Caco-2 (cell line): ENCODE measurements at regions of chr19 and their contacts with region 1.

Region 1: DNA sequence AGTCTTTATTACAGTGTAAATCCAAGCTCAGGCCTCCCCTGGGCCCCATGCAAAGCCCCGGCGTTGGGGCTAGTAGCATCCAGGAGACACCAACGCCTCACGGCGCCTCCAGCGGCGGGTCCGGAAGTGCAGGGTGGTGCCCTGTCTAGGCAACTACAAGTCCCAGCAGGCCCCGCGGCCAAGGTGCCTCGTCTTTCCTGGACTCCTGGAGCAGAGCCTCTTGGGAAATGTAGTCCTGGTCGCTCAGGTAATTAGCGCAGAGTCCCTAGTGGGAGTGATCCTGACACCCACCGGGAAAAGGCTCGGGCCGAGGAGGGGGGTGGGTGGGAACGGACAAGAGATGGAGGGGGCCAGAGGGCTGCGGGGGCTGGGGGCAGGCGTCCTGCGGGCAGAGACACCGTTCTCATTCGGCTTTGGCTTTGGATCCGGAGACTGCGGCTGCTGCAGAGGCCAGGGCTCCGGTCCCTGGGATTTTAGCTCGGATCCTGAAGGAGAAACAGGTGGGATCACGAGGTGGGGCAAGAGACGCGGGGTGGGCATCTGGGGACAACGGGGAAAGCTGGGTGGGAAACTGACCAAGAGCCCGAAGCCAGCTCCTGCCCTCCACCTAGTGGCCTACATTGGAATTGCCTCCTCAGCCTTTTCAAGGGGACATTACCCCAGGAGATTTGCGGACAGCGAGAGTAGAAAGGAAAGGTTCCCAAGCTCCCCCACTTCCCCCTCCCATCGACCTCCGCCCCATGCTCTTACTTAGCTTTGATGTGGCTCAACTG is 11.4 kb downstream of the RTN2 start:
- DNase-seq: peak; percentile 98
- H3K4me3 ChIP-seq: peak overlapping the region; percentile 66
- H3K4me3 Mint-ChIP-seq: peak overlapping the region; percentile 88
- H3K27ac Mint-ChIP-seq: peak overlapping the region; percentile 74
- H3K4me1 ChIP-seq: no peaks in the 10 kb centered on the region
- H3K4me1 Mint-ChIP-seq: peaks cover 6% of the 10 kb centered on the region
- H3K27me3 ChIP-seq: no peaks in the 10 kb centered on the region
- H3K27me3 Mint-ChIP-seq: no peaks in the 10 kb centered on the region
- CTCF ChIP-seq: peak; percentile 91 to 92

Region 2: GRCh38 chr19:45264781-45265317 is 220.6 kb before region 1 on chr19:
- CTCF ChIA-PET with region 1: no interaction called
- POLR2A ChIA-PET with region 1: no interaction called
- intact Hi-C with region 1: no loop called
- DNase-seq: no peak
- H3K4me3 ChIP-seq: no peak overlapping the region
- H3K4me3 Mint-ChIP-seq: no peak overlapping the region
- H3K27ac Mint-ChIP-seq: no peak overlapping the region
- H3K4me1 ChIP-seq: no peaks in the 10 kb centered on the region
- H3K4me1 Mint-ChIP-seq: no peaks in the 10 kb centered on the region
- H3K27me3 ChIP-seq: no peaks in the 10 kb centered on the region
- H3K27me3 Mint-ChIP-seq: no peaks in the 10 kb centered on the region
- CTCF ChIP-seq: no peak

Region 3: GRCh38 chr19:45496349-45496953 is 11.0 kb after region 1 on chr19:
- CTCF ChIA-PET with region 1: interaction called, 24 read pairs
- POLR2A ChIA-PET with region 1: no interaction called
- intact Hi-C with region 1: loop called (anchors 1 kb)
- DNase-seq: peak in 1 of 2 experiments; percentile 76
- H3K4me3 ChIP-seq: peak overlapping the region; percentile 80
- H3K4me3 Mint-ChIP-seq: peak overlapping the region; percentile 98
- H3K27ac Mint-ChIP-seq: peak overlapping the region; percentile 85
- H3K4me1 ChIP-seq: peaks cover 22% of the 10 kb centered on the region
- H3K4me1 Mint-ChIP-seq: peaks cover 23% of the 10 kb centered on the region
- H3K27me3 ChIP-seq: no peaks in the 10 kb centered on the region
- H3K27me3 Mint-ChIP-seq: peaks cover 8% of the 10 kb centered on the region
- CTCF ChIP-seq: no peak

Region 4: DNA sequence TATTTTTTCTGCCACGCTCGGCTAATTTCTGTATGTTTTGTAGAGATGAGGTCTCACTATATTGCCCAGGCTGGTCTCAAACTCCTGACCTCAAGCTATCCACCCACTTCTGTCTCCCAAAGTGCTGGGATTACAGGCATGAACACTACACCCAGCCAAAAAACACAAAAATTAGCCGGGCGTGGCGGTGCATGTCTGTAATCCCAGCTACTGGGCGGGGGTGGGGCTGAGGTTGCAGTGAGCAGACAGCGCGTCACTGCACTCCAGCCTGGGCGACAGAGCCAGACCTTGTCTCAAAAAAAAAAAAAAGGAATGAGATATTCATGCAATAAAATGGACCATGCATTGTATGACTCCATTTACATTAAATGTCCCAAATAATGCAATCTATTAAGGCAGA is 54.0 kb after region 1 on chr19:
- CTCF ChIA-PET with region 1: no interaction called
- POLR2A ChIA-PET with region 1: no interaction called
- intact Hi-C with region 1: no loop called
- DNase-seq: no peak
- H3K4me3 ChIP-seq: no peak overlapping the region
- H3K4me3 Mint-ChIP-seq: no peak overlapping the region
- H3K27ac Mint-ChIP-seq: no peak overlapping the region
- H3K4me1 ChIP-seq: peaks cover 6% of the 10 kb centered on the region
- H3K4me1 Mint-ChIP-seq: no peaks in the 10 kb centered on the region
- H3K27me3 ChIP-seq: no peaks in the 10 kb centered on the region
- H3K27me3 Mint-ChIP-seq: no peaks in the 10 kb centered on the region
- CTCF ChIP-seq: no peak